GM12878 (cell line): ENCODE measurements at regions of chr13 and their contacts with region 1.

Region 1: GRCh38 chr13:36999054-36999714 is at the start of gene ALG5:
- DNase-seq: peak; percentile 44
- ATAC-seq: peak; percentile 78
- H3K4me3 ChIP-seq: peak within 1 kb of the TSS; percentile 100
- H3K27ac ChIP-seq: peak within 1 kb of the TSS; percentile 92
- H3K4me1 ChIP-seq: peaks cover 4% of the 10 kb centered on the region; the same call in 1 of the 2 replicates
- H3K27me3 ChIP-seq: no peaks in the 10 kb centered on the region
- CTCF ChIP-seq: peak; percentile 72 to 99 (median 97); a peak in 5 of 6 replicates
- EP300 ChIP-seq: 0 out of 4 replicates have a peak, but pooled peaks of 1 of the 2 experiments have one; percentile 10
- POLR2A ChIP-seq: peak; percentile 95
- RAD21 ChIP-seq: no peak
- polyA plus RNA-seq, gene ALG5: 61.6 to 79.9 TPM

Region 2: GRCh38 chr13:37068962-37069361 is 69.8 kb after region 1 on chr13:
- CTCF ChIA-PET with region 1: interaction called, 3 read pairs
- POLR2A ChIA-PET with region 1: no interaction called
- RAD21 ChIA-PET with region 1: no interaction called
- SMC1A ChIA-PET with region 1: interaction called, 3 read pairs
- in situ Hi-C with region 1: no loop called
- intact Hi-C with region 1: loop called (anchors 2 kb)
- DNase-seq: no peak
- ATAC-seq: peak; percentile 52; the same call in 2 of the 3 replicates
- H3K4me3 ChIP-seq: no peak overlapping the region
- H3K27ac ChIP-seq: no peak overlapping the region
- H3K4me1 ChIP-seq: no peaks in the 10 kb centered on the region
- H3K27me3 ChIP-seq: no peaks in the 10 kb centered on the region; a peak in 1 of 4 replicates
- CTCF ChIP-seq: peak in 2 of 3 experiments; percentile 4 to 29; a peak in 2 of 6 replicates
- EP300 ChIP-seq: no peak
- POLR2A ChIP-seq: no peak
- RAD21 ChIP-seq: peak; percentile 36